Mammary epithelial cell (primary cell): ENCODE measurements at regions of chr15 and their contacts with region 1.

Region 1: GRCh38 chr15:65939901-65940617 is 70.8 kb downstream of the RAB11A start:
- DNase-seq: peak; percentile 85
- H3K4me3 ChIP-seq: no peak overlapping the region
- H3K27ac ChIP-seq: no peak overlapping the region
- H3K4me1 ChIP-seq: peaks cover 17% of the 10 kb centered on the region
- H3K27me3 ChIP-seq: no peaks in the 10 kb centered on the region
- CTCF ChIP-seq: no peak

Region 2: DNA sequence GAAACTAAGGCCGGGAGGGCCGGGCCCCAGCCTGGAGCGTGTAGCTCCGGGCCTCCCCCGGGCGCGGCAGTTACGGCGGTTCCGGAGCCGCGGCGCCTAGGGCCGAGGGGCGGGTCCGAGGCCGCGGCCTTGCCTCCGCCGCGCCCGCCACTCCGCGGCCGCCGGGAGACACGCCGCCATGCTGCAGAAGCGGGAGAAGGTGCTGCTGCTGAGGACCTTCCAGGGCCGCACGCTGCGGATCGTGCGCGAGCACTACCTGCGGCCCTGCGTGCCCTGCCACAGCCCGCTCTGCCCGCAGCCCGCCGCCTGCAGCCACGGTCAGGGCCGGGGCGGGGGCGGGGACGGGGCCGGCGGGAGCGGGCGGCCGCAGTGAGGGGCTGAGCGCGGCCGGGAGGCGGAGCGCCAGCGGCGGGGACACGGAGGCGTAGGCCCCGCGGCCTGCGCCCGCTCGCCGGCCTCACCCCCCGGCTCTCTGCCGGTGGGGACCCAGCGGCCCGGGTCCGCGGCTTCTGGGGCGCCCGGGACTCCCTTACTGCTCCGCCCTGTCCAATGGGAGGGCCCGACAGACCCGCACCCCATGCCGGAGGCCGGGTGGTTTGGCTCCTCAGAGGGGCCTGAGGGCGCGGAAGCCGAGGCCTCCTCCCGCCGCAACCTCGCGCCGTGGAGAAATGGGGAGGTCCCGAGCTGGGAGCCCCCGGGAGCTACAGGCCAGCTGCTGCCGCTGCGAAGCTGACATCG is 353.5 kb after region 1 on chr15 and contains the start of gene DIS3L:
- CTCF ChIA-PET with region 1: no interaction called
- dilution Hi-C with region 1: no loop called
- in situ Hi-C with region 1: loop called in 1 of 2 experiments (anchors 25 kb)
- intact Hi-C with region 1: no loop called
- DNase-seq: peak; percentile 55
- H3K4me3 ChIP-seq: peak within 1 kb of the TSS; percentile 55 to 86 (median 63)
- H3K27ac ChIP-seq: peak within 1 kb of the TSS; percentile 57
- H3K4me1 ChIP-seq: peaks cover 30% of the 10 kb centered on the region
- H3K27me3 ChIP-seq: no peaks in the 10 kb centered on the region
- CTCF ChIP-seq: no peak
- total RNA-seq, gene DIS3L: 17.7 to 22.1 TPM